CD8-positive, alpha-beta T cell (primary cell): ENCODE measurements at regions of chr6 and their contacts with region 1.

Region 1: GRCh38 chr6:57316581-57317059 is 810 bp upstream of the PRIM2 start:
- DNase-seq: peak; percentile 62 to 91 (median 81)
- ATAC-seq: peak; percentile 86
- H3K4me3 ChIP-seq: peak overlapping the region; percentile 58 to 74
- H3K4me3 Mint-ChIP-seq: peak overlapping the region; percentile 99
- H3K27ac ChIP-seq: peak overlapping the region; percentile 55 to 61
- H3K27ac Mint-ChIP-seq: peak overlapping the region; percentile 96
- H3K4me1 ChIP-seq: peaks cover 10% of the 10 kb centered on the region
- H3K4me1 Mint-ChIP-seq: peaks cover 32% of the 10 kb centered on the region
- H3K27me3 ChIP-seq: no peaks in the 10 kb centered on the region
- H3K27me3 Mint-ChIP-seq: no peaks in the 10 kb centered on the region
- CTCF ChIP-seq: peak; percentile 91

Region 2: DNA sequence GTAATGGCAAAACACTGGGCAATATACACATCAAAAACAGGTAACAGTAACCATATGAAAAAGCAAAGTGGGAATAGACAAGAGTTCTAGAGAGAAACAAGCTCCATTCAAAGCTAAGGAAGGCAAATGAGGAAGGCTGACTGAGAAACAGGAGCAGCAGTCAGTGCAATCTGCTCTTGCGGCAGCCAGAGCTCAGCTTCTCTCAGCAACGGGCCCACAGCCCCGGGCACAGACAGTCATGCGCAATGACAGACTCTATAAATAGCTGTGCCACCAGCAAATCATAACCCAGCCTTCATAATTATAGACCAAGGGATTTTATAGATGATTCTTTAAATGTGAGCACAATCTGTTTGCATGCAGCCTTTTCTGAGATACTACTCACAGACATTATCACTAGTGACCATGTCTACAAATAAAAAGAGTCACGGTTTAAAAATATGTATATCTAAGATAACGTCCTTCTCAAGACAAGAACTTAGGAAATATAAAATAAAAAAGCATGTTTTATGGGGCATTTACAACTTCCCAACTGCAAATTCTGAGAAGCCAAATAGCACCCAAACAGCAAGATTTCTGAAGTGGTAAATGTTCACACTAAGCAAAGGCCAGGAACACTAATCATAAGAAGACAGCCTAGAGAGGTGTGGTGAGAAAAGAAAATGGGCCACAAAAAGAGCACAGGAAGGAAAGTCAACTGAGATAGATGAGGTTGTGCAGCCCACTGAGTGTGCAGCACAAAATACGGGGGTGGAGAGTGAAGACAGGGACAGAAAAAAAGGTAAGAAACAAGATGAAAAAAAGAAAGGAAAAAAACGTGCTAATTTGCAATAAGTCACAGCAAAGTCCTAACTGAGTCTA is 401.6 kb before region 1 on chr6:
- CTCF ChIA-PET with region 1: interaction called, 16 read pairs
- POLR2A ChIA-PET with region 1: no interaction called
- intact Hi-C with region 1: no loop called
- DNase-seq: peak in 2 of 9 experiments; percentile 12 to 16
- ATAC-seq: no peak
- H3K4me3 ChIP-seq: no peak overlapping the region
- H3K4me3 Mint-ChIP-seq: no peak overlapping the region
- H3K27ac ChIP-seq: no peak overlapping the region
- H3K27ac Mint-ChIP-seq: no peak overlapping the region
- H3K4me1 ChIP-seq: peaks cover 8% of the 10 kb centered on the region
- H3K4me1 Mint-ChIP-seq: no peaks in the 10 kb centered on the region
- H3K27me3 ChIP-seq: peaks cover 0 to under 1% of the 10 kb centered on the region in 2 experiments
- H3K27me3 Mint-ChIP-seq: peaks cover 8% of the 10 kb centered on the region
- CTCF ChIP-seq: no peak

Region 3: GRCh38 chr6:57040009-57040408 is 276.6 kb before region 1 on chr6:
- CTCF ChIA-PET with region 1: no interaction called
- POLR2A ChIA-PET with region 1: no interaction called
- intact Hi-C with region 1: loop called in 1 of 2 experiments (anchors 10 kb)
- DNase-seq: no peak
- ATAC-seq: no peak
- H3K4me3 ChIP-seq: no peak overlapping the region
- H3K4me3 Mint-ChIP-seq: no peak overlapping the region
- H3K27ac ChIP-seq: no peak overlapping the region
- H3K27ac Mint-ChIP-seq: no peak overlapping the region
- H3K4me1 ChIP-seq: no peaks in the 10 kb centered on the region
- H3K4me1 Mint-ChIP-seq: no peaks in the 10 kb centered on the region
- H3K27me3 ChIP-seq: peaks cover 4 to 7% of the 10 kb centered on the region in 2 experiments
- H3K27me3 Mint-ChIP-seq: peaks cover 37% of the 10 kb centered on the region
- CTCF ChIP-seq: no peak

Region 4: DNA sequence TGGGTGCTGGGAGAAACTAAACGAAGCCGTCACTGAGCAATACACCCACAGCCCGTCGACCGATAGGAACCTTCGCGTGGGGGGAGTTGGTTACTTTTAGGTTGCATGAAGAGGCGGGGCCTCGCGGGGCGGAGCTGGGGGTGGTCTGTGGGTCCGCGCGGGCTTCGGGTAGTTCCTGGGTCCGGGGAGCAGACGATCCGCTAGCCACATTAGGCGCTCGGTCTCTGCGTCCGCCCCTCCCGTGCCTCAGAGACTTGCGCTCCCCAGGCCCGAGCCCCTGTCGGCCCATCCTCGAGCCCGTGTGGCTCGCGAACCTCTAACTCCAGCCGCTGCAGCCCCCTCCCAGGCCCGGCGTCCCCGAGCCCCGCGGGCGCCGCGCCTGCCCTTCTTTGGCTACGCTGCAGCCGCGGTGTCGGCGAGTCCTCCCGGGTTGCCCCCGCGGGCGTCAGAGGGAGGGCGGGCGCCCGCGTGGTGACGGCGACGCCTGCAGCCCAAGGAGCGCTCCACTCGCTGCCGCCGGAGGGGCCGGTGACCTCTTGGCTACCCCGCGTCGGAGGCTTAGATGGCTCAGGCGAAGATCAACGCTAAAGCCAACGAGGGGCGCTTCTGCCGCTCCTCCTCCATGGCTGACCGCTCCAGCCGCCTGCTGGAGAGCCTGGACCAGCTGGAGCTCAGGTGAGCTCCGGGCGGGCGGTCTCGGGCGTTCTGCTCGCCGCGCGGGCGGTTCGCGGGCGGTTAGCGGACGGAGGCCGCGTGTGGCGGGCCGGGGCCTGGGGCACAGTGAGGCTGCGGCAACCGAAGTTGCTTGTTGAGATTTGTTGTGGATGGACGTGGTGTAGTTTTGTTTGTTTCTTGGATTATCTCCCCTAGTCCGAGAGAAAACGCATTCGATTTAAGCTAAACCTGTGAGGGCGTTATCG is 144.2 kb before region 1 on chr6 and contains the start of gene BAG2:
- CTCF ChIA-PET with region 1: interaction called, 5 read pairs
- POLR2A ChIA-PET with region 1: interaction called, 3 read pairs
- intact Hi-C with region 1: loop called (anchors 1 to 5 kb)
- DNase-seq: peak; percentile 79 to 91 (median 89)
- ATAC-seq: peak; percentile 85
- H3K4me3 ChIP-seq: peak within 1 kb of the TSS; percentile 62 to 77
- H3K4me3 Mint-ChIP-seq: peak within 1 kb of the TSS; percentile 87
- H3K27ac ChIP-seq: peak within 1 kb of the TSS; percentile 62 to 83
- H3K27ac Mint-ChIP-seq: peak within 1 kb of the TSS; percentile 92
- H3K4me1 ChIP-seq: peaks cover 23% of the 10 kb centered on the region
- H3K4me1 Mint-ChIP-seq: peaks cover 47% of the 10 kb centered on the region
- H3K27me3 ChIP-seq: no peaks in the 10 kb centered on the region
- H3K27me3 Mint-ChIP-seq: no peaks in the 10 kb centered on the region
- CTCF ChIP-seq: no peak
- total RNA-seq, gene BAG2: 4.6 to 5.0 TPM

Region 5: DNA sequence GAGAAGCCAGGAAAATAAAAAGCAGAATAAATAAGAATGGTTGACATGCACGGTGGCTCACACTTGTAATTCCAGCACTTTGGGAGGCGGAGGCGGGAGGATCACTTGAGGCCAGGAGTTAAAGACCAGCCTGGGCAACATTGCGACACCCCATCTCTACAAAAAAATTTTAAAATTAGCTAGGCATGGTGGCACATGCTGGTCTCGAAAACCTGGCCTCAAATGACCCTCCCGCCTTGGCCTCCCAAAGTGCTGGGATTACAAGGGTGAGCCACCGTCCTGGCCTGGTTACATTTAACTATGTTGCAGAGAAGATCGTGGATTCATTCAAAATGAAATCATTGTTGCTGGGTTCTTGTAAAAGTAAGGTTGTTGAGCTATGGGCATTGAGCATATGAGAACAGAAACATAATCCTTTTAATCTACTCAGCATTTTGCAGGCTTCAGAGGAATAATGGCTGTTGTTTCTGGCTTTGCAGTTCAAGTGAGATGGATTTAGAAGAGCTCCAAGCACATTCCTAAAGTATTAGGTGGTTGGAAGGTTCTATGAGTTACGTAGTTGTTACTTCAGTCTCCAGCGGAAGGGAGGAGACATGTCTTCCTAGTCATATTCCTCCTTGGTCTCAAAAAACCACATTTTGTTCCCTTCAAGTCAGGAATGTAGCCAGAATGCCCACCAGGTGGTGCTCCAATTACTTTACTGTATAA is 48.9 kb before region 1 on chr6:
- CTCF ChIA-PET with region 1: interaction called, 31 read pairs
- POLR2A ChIA-PET with region 1: no interaction called
- intact Hi-C with region 1: loop called (anchors 1 to 2 kb)
- DNase-seq: peak in 7 of 9 experiments; percentile 6 to 61 (median 40)
- ATAC-seq: peak; percentile 31
- H3K4me3 ChIP-seq: no peak overlapping the region
- H3K4me3 Mint-ChIP-seq: no peak overlapping the region
- H3K27ac ChIP-seq: no peak overlapping the region
- H3K27ac Mint-ChIP-seq: no peak overlapping the region
- H3K4me1 ChIP-seq: no peaks in the 10 kb centered on the region
- H3K4me1 Mint-ChIP-seq: no peaks in the 10 kb centered on the region
- H3K27me3 ChIP-seq: no peaks in the 10 kb centered on the region
- H3K27me3 Mint-ChIP-seq: peaks cover 5% of the 10 kb centered on the region
- CTCF ChIP-seq: peak; percentile 56